ENCODE measurements at regions of chr1 and their contacts with region 1.

Region 1: DNA sequence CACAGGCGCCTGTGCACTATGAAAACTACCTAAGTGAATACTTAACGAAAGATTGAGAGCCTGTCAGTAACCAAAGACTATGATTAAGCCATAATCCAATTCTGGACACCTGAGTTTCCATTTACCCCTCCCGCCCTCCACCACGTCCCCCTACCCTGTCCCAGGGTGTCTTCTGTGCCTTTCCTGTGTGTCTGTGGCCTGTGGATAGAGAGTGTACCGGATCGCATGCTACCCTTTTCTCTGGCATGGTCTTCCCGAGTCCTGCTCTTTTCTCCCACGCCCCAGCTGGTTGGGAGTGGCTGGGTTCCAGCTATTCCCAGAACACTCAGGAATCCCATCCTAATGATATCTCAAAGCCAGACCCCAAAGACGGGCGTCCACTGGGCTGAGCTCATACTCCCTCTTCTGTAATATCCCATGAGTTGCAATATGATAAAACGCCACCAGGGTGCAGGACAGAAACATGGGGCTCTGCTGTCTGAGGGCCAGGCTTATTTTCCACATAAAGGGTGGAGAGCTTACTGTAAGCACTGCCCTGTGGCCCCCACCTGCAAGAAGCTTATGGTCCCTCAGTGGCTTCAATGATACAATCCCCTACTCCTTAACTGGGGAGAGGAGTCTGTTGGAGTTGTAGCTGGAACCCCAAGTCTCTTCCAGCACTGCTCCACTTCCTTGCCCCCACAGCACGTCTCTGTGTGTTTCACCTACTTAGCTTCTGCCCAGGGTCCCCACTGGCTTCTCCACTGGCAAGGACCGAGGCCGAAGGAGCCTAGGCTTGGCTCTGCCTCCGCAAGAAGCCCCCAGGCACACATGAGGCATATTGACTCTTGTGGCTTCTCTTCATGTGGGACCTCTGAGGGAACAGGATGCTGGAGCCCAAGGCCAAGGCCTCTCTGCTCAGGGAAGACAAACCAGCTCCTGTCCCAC is 17.6 kb upstream of the ALX3 start:
- DNase-seq: peak; percentile 64
- H3K4me3 Mint-ChIP-seq: no peak overlapping the region
- H3K27ac Mint-ChIP-seq: no peak overlapping the region
- H3K4me1 Mint-ChIP-seq: peaks cover 11% of the 10 kb centered on the region
- H3K27me3 Mint-ChIP-seq: peaks cover 44% of the 10 kb centered on the region

Region 2: GRCh38 chr1:110053557-110054428 is 34.3 kb before region 1 on chr1:
- CTCF ChIA-PET with region 1: interaction called, 10 read pairs
- intact Hi-C with region 1: no loop called
- DNase-seq: peak; percentile 81
- H3K4me3 Mint-ChIP-seq: no peak overlapping the region
- H3K27ac Mint-ChIP-seq: no peak overlapping the region
- H3K4me1 Mint-ChIP-seq: no peaks in the 10 kb centered on the region
- H3K27me3 Mint-ChIP-seq: no peaks in the 10 kb centered on the region

Region 3: GRCh38 chr1:110068646-110069403 is 19.2 kb before region 1 on chr1:
- CTCF ChIA-PET with region 1: interaction called, 6 read pairs
- intact Hi-C with region 1: loop called (anchors 2 kb)
- DNase-seq: no peak
- H3K4me3 Mint-ChIP-seq: peak overlapping the region; percentile 30
- H3K27ac Mint-ChIP-seq: no peak overlapping the region
- H3K4me1 Mint-ChIP-seq: peaks cover 14% of the 10 kb centered on the region
- H3K27me3 Mint-ChIP-seq: peaks cover 59% of the 10 kb centered on the region

Region 4: DNA sequence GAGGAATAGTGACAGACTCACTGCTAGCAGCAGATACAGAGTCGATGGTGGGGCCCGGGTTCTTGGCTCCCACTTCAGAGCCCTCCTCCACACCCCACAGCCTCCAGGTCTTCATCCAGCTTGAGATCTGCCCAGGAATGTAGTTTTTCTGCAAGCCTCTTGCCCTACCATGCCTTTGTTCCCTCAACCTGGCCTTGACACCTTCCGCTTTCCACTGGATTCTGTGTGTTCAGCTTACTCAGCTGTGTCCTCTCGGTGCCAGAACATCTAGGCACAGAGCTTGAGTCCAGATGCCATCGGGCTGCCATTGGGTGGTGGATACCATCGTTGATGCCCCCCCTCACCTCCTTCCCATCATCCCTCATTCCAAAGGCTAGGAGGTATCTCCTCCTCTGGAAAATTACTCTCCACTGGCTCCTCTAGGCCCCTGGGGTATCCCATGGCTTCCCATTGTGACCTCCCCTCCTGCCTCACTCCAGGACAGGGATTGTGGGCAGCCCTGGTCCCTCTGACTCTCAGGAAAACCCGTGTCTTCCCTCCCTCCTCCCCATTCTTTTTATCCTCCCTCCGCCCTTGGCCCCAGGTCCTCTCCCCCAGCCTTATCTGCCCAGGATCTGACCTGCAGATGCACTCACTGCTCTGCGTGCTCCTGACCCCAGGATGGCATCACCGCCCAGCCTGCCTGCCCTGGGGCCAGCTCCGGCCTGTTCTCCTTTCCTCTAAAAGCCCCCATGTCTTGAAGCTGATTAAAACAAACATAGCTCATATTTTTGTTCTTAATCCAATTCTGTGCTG is 10.0 kb after region 1 on chr1:
- CTCF ChIA-PET with region 1: interaction called, 62 read pairs
- intact Hi-C with region 1: no loop called
- DNase-seq: no peak
- H3K4me3 Mint-ChIP-seq: no peak overlapping the region
- H3K27ac Mint-ChIP-seq: no peak overlapping the region
- H3K4me1 Mint-ChIP-seq: no peaks in the 10 kb centered on the region
- H3K27me3 Mint-ChIP-seq: peaks cover 4% of the 10 kb centered on the region

Region 5: GRCh38 chr1:110118636-110119615 is 30.9 kb after region 1 on chr1:
- CTCF ChIA-PET with region 1: interaction called, 12 read pairs
- intact Hi-C with region 1: loop called (anchors 1 kb)
- DNase-seq: peak; percentile 50
- H3K4me3 Mint-ChIP-seq: no peak overlapping the region
- H3K27ac Mint-ChIP-seq: no peak overlapping the region
- H3K4me1 Mint-ChIP-seq: peaks cover 4% of the 10 kb centered on the region
- H3K27me3 Mint-ChIP-seq: peaks cover 18% of the 10 kb centered on the region